ENCODE measurements at regions of chr18 and their contacts with region 1.

Region 1: GRCh38 chr18:8771930-8772329 is 66.6 kb downstream of the MTCL1 start:
- DNase-seq: peak; percentile 68
- ATAC-seq: peak; percentile 58

Region 2: DNA sequence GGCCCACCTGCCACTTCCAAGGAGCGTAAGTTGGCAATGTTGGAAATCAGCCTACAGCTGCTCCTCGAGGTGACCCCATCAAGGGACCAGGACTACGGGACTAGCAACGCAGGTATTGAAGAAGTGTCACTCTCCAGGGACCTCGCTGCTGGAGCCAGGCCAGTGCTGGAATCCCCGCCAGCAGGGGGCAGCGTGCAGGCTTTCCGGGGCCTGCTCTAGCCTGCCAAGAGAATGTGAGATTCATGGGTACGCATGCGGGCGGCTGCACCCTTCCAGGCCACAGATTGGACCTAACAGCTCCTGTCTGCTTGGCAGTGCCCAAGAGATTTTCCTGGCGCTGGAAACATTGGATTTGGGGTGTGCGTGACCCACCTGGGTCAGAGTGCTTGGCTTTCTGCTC is 345.5 kb before region 1 on chr18:
- intact Hi-C with region 1: no loop called
- DNase-seq: no peak
- ATAC-seq: no peak

Region 3: DNA sequence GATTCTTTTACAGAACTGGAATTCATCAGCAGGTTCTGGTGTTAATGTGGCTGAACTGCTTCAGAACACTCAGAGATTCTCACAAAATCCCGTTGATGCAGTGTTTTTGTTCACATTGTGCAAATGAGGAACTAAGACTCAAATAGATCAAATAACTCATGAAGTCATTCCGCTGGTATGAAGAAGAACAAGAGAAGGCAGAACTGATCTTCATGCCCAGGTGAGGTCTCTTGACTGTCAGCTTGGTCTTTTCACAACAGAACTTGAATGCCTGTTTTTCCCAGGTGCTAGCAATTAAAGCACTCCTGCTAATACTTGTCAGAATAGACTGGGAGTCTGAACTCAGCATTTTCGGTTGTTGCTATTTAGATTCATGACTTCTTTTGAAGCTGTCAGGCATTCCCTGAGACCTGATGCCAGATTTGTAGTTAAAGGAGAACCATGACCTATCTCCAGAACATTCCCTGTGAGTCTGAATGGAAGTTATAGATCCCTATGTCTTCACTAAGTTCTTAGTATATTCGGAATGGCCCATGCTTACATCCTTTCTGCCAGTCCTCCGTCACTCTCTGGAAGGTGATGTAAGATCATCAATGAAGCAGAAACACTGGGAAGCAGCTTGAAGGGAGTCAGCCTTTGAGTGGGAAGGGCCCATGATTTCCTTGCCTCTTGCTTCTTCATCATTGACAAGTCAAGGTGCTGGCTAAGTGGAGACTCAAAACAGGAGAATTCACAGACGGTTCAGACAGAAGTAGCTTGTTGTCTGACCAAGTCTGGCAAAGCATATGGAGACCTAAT is 89.1 kb after region 1 on chr18:
- intact Hi-C with region 1: loop called (anchors 10 kb)
- DNase-seq: no peak
- ATAC-seq: no peak